ENCODE measurements at regions of chr13 and their contacts with region 1.

Region 1: GRCh38 chr13:78241278-78241919 is 322.8 kb upstream of the EDNRB start:
- DNase-seq: no peak
- ATAC-seq: peak; percentile 77
- H3K4me3 ChIP-seq: no peak overlapping the region
- H3K27ac ChIP-seq: no peak overlapping the region
- H3K4me1 ChIP-seq: no peaks in the 10 kb centered on the region
- H3K27me3 ChIP-seq: no peaks in the 10 kb centered on the region
- CTCF ChIP-seq: peak; percentile 54 to 74 (median 70)
- EP300 ChIP-seq: no peak
- POLR2A ChIP-seq: no peak
- RAD21 ChIP-seq: peak; percentile 87

Region 2: GRCh38 chr13:78067290-78067689 is 174.1 kb before region 1 on chr13:
- CTCF ChIA-PET with region 1: no interaction called
- POLR2A ChIA-PET with region 1: no interaction called
- RAD21 ChIA-PET with region 1: no interaction called
- SMC1A ChIA-PET with region 1: no interaction called
- in situ Hi-C with region 1: no loop called
- intact Hi-C with region 1: no loop called
- DNase-seq: no peak
- ATAC-seq: no peak
- H3K4me3 ChIP-seq: no peak overlapping the region
- H3K27ac ChIP-seq: no peak overlapping the region
- H3K4me1 ChIP-seq: no peaks in the 10 kb centered on the region
- H3K27me3 ChIP-seq: no peaks in the 10 kb centered on the region
- CTCF ChIP-seq: no peak
- EP300 ChIP-seq: no peak
- POLR2A ChIP-seq: no peak
- RAD21 ChIP-seq: no peak

Region 3: DNA sequence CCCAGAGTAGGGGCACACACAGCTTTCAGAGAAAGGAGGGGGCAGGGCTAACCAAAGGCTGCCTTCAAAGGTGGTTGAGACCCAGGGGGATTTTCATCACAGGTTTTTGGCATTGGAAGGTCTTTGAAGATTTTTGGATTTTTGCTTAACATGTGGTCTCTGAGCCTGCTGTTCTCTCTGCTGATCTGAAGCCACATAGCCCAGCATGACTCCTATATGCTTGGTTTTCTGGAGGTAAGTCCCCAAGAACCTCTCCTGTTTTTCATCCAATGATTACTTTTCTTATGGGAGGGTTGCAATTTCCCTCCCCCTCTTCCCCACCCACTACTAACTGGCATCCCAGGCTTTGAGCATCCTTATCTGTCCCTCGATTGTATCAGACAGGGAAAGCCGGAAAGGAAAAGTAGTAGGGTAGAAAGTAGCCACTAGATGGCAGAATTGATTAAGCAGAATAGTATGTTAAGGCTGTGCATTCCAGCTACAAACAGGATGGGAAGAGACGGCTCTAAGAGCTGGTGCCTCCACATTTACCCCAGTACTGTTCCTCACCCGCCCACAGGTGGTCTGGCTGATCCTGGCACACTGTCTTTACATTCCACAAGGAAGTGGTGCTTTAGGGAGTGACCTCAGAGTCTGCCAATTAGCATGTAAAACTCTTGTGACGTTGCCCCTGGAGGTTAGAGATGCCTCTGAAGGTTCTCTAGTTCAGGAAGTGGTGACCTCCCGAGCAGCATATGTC is 103.8 kb before region 1 on chr13:
- CTCF ChIA-PET with region 1: interaction called, 73 read pairs
- POLR2A ChIA-PET with region 1: interaction called, 4 read pairs
- RAD21 ChIA-PET with region 1: interaction called, 50 read pairs
- SMC1A ChIA-PET with region 1: interaction called, 54 read pairs
- in situ Hi-C with region 1: no loop called
- intact Hi-C with region 1: no loop called
- DNase-seq: peak; percentile 46
- ATAC-seq: peak; percentile 95
- H3K4me3 ChIP-seq: no peak overlapping the region
- H3K27ac ChIP-seq: no peak overlapping the region
- H3K4me1 ChIP-seq: no peaks in the 10 kb centered on the region
- H3K27me3 ChIP-seq: 0 out of 4 replicates have a peak, but pooled peaks cover 0 to under 1% of the 10 kb centered on the region in 2 experiments
- CTCF ChIP-seq: peak; percentile 67 to 74 (median 67)
- EP300 ChIP-seq: no peak
- POLR2A ChIP-seq: no peak
- RAD21 ChIP-seq: peak; percentile 82

Region 4: DNA sequence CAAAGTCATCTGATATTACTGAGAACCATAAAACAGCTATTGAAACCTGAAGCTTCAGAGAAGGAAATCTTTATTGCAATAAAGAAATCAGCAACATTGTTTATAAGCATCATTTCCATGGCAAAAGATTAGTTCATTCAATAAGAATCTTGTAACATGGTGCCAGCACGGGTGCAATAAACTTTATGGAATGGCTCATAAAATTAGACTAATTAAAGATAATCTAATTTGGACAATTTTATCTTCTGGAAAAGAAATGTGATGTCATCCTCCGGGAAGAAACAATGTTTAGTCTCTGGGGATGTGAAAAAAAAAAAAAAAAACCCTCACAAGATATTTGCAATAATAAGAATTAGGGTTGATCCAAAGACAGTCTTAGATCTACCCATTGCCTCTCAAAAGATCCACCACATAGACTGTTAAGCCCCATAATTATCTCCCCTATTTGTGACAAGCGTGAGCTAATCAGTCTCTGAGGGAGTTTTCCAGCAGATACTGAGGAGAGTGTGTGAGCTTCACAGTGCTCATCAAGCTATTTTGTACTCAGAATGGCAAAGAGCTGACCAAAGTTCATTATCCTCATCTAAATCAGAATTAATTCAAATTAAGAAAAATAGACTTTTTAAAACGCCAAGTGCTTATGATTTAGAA is 25.8 kb before region 1 on chr13:
- CTCF ChIA-PET with region 1: interaction called, 13 read pairs
- POLR2A ChIA-PET with region 1: no interaction called
- RAD21 ChIA-PET with region 1: no interaction called
- SMC1A ChIA-PET with region 1: interaction called, 5 read pairs
- in situ Hi-C with region 1: no loop called
- intact Hi-C with region 1: no loop called
- DNase-seq: no peak
- ATAC-seq: no peak
- H3K4me3 ChIP-seq: no peak overlapping the region
- H3K27ac ChIP-seq: no peak overlapping the region
- H3K4me1 ChIP-seq: no peaks in the 10 kb centered on the region
- H3K27me3 ChIP-seq: no peaks in the 10 kb centered on the region
- CTCF ChIP-seq: no peak
- EP300 ChIP-seq: no peak
- POLR2A ChIP-seq: no peak
- RAD21 ChIP-seq: no peak

Region 5: DNA sequence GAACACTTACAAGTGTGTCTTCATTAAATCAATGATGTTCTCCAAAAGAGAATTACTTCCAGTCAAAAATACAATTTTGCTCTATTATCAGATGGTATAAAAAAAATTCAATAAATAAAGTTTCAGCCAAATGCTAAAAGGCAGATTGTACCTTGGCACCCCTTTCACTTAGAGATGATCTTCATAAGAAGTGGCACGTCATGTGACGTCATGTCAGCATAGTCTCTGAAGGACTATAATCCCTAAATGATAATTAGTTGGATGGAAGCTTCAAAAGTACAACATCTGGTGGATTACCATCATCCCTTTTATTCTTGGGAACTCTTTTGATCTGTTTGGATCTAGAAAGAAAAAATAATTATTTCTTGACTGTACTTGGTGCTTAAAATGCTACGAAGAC is 12.7 kb after region 1 on chr13:
- CTCF ChIA-PET with region 1: interaction called, 43 read pairs
- POLR2A ChIA-PET with region 1: no interaction called
- RAD21 ChIA-PET with region 1: interaction called, 11 read pairs
- SMC1A ChIA-PET with region 1: interaction called, 11 read pairs
- in situ Hi-C with region 1: no loop called
- intact Hi-C with region 1: no loop called
- DNase-seq: no peak
- ATAC-seq: no peak
- H3K4me3 ChIP-seq: no peak overlapping the region
- H3K27ac ChIP-seq: no peak overlapping the region
- H3K4me1 ChIP-seq: no peaks in the 10 kb centered on the region
- H3K27me3 ChIP-seq: no peaks in the 10 kb centered on the region
- CTCF ChIP-seq: no peak
- EP300 ChIP-seq: no peak
- POLR2A ChIP-seq: no peak
- RAD21 ChIP-seq: no peak

Region 6: GRCh38 chr13:78806457-78806856 is 565.1 kb after region 1 on chr13:
- CTCF ChIA-PET with region 1: no interaction called
- POLR2A ChIA-PET with region 1: no interaction called
- RAD21 ChIA-PET with region 1: interaction called, 3 read pairs
- SMC1A ChIA-PET with region 1: interaction called, 3 read pairs
- in situ Hi-C with region 1: no loop called
- intact Hi-C with region 1: loop called (anchors 5 kb)
- DNase-seq: no peak
- ATAC-seq: peak; percentile 74
- H3K4me3 ChIP-seq: no peak overlapping the region
- H3K27ac ChIP-seq: no peak overlapping the region
- H3K4me1 ChIP-seq: no peaks in the 10 kb centered on the region
- H3K27me3 ChIP-seq: no peaks in the 10 kb centered on the region
- CTCF ChIP-seq: peak; percentile 12 to 62 (median 49); a peak in 4 of 6 replicates
- EP300 ChIP-seq: no peak
- POLR2A ChIP-seq: no peak
- RAD21 ChIP-seq: peak; percentile 46

Measured in GM12878 (cell line).